Astrocyte of the cerebellum (primary cell): ENCODE measurements at regions of chr6 and their contacts with region 1.

Region 1: GRCh38 chr6:131225127-131225526 is 89.9 kb downstream of the AKAP7 start:
- DNase-seq: no peak
- H3K4me3 ChIP-seq: no peak overlapping the region
- CTCF ChIP-seq: no peak

Region 2: DNA sequence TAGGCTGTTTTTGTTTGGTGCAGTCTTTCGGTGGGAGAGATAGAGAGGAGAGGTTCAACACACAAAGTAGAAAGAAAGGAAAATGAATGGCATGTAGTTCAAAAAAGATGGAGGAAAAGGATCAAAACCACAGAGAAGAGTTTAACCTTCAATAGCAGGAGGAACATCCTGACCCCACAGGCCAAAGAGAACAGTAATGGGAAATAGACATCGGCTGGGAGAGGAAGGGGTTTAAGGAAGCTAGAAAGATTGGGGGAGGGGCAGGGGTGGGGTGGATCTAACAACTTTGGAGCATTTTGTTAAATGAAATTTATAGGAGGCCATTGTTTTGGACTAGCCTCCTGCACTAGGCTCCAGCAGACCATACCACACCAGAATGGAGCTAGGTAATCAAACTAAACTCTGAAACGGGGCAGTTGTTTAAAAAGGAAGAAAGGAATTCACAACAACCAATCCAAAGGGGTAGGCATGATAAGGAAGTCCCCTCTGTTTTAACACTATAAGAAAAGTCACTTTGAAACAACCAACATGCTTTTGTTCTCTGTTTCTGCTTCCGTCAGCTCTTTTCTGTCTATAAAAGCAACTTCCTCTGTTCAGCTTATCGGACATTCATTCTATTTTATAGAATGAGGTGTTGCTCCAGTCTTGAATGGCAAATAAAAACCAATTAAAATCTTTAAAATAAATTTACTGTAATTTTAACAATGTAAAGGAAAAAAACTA is 244.7 kb before region 1 on chr6:
- in situ Hi-C with region 1: no loop called
- DNase-seq: no peak
- H3K4me3 ChIP-seq: no peak overlapping the region
- CTCF ChIP-seq: no peak

Region 3: GRCh38 chr6:131269565-131270391 is 44.7 kb after region 1 on chr6:
- in situ Hi-C with region 1: loop called (anchors 5 kb)
- DNase-seq: no peak
- H3K4me3 ChIP-seq: no peak overlapping the region
- CTCF ChIP-seq: no peak